ENCODE measurements at regions of chr3 and their contacts with region 1.

Region 1: GRCh38 chr3:141192345-141192744 is 39.3 kb upstream of the PXYLP1 start:
- DNase-seq: peak; percentile 96 to 100 (median 98)
- H3K4me3 ChIP-seq: no peak overlapping the region
- H3K27ac ChIP-seq: no peak overlapping the region
- H3K4me1 ChIP-seq: no peaks in the 10 kb centered on the region
- H3K27me3 ChIP-seq: no peaks in the 10 kb centered on the region
- CTCF ChIP-seq: peak; percentile 98 to 100 (median 100)
- POLR2A ChIP-seq: no peak

Region 2: GRCh38 chr3:140898340-140899180 is 293.8 kb before region 1 on chr3:
- intact Hi-C with region 1: loop called in 1 of 2 experiments (anchors 5 kb)
- DNase-seq: peak in 5 of 7 donors; percentile 18 to 37 (median 30)
- H3K4me3 ChIP-seq: no peak overlapping the region
- H3K27ac ChIP-seq: no peak overlapping the region
- H3K4me1 ChIP-seq: no peaks in the 10 kb centered on the region
- H3K27me3 ChIP-seq: no peaks in the 10 kb centered on the region
- CTCF ChIP-seq: peak; percentile 29 to 73 (median 64)
- POLR2A ChIP-seq: no peak

Region 3: GRCh38 chr3:141000027-141000663 is 192.2 kb before region 1 on chr3:
- intact Hi-C with region 1: loop called (anchors 5 kb)
- DNase-seq: peak; percentile 52 to 86 (median 67)
- H3K4me3 ChIP-seq: no peak overlapping the region
- H3K27ac ChIP-seq: no peak overlapping the region
- H3K4me1 ChIP-seq: no peaks in the 10 kb centered on the region
- H3K27me3 ChIP-seq: no peaks in the 10 kb centered on the region
- CTCF ChIP-seq: peak; percentile 38 to 75 (median 64)
- POLR2A ChIP-seq: no peak

Region 4: GRCh38 chr3:141011232-141011996 is 180.9 kb before region 1 on chr3:
- intact Hi-C with region 1: loop called in 1 of 2 experiments (anchors 5 kb)
- DNase-seq: peak; percentile 58 to 93 (median 76)
- H3K4me3 ChIP-seq: no peak overlapping the region
- H3K27ac ChIP-seq: no peak overlapping the region
- H3K4me1 ChIP-seq: no peaks in the 10 kb centered on the region
- H3K27me3 ChIP-seq: peaks cover 15% of the 10 kb centered on the region
- CTCF ChIP-seq: peak; percentile 53 to 78 (median 74)
- POLR2A ChIP-seq: no peak

Region 5: GRCh38 chr3:141255846-141256261 is 63.5 kb after region 1 on chr3:
- intact Hi-C with region 1: no loop called
- DNase-seq: peak in 2 of 7 donors; percentile 39 to 54
- H3K4me3 ChIP-seq: no peak overlapping the region
- H3K27ac ChIP-seq: no peak overlapping the region
- H3K4me1 ChIP-seq: no peaks in the 10 kb centered on the region
- H3K27me3 ChIP-seq: no peaks in the 10 kb centered on the region
- CTCF ChIP-seq: peak in 3 of 6 experiments; percentile 10 to 24 (median 17)
- POLR2A ChIP-seq: no peak

Measured in adrenal gland (tissue), 19 donors.